ENCODE measurements at regions of chr19 and their contacts with region 1.

Region 1: GRCh38 chr19:40633207-40633606 is 32.0 kb downstream of the LTBP4 start:
- DNase-seq: no peak
- H3K4me3 Mint-ChIP-seq: no peak overlapping the region
- H3K27ac Mint-ChIP-seq: no peak overlapping the region
- H3K4me1 Mint-ChIP-seq: peaks cover 9% of the 10 kb centered on the region
- H3K27me3 Mint-ChIP-seq: peaks cover 7% of the 10 kb centered on the region

Region 2: DNA sequence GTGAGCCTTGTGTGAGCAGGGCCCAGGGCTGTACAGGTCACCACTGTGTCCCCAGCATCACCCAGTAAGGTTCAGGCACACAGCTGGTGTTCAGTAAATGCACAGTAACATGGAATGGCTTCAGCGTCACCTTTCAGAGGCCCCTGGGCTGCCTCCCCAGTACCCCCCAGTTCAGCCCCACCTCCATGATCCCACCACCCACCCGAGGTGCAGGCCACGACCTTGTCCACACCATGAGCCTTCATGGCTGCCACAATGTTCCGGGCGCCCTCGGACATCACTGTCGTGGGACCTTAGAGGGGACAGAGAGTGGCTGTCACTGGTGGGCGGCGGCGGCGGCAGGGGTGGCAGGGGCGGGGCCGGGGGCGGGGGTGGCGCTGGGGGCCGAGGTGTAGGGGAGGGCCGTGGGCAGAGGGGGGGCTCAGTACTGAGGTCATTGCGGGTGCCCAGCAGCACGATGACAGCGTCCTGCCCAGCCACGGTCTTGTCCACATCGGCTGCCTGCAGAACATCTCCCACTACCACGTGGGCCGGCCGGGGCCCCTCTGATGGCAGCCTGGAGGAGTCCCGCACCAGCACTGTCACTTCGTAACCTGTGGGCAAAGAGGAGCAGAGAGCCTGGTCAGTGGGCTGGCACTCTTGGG is 175.1 kb before region 1 on chr19:
- CTCF ChIA-PET with region 1: no interaction called
- POLR2A ChIA-PET with region 1: no interaction called
- DNase-seq: no peak
- H3K4me3 Mint-ChIP-seq: no peak overlapping the region
- H3K27ac Mint-ChIP-seq: no peak overlapping the region
- H3K4me1 Mint-ChIP-seq: peaks cover 5% of the 10 kb centered on the region
- H3K27me3 Mint-ChIP-seq: no peaks in the 10 kb centered on the region

Region 3: DNA sequence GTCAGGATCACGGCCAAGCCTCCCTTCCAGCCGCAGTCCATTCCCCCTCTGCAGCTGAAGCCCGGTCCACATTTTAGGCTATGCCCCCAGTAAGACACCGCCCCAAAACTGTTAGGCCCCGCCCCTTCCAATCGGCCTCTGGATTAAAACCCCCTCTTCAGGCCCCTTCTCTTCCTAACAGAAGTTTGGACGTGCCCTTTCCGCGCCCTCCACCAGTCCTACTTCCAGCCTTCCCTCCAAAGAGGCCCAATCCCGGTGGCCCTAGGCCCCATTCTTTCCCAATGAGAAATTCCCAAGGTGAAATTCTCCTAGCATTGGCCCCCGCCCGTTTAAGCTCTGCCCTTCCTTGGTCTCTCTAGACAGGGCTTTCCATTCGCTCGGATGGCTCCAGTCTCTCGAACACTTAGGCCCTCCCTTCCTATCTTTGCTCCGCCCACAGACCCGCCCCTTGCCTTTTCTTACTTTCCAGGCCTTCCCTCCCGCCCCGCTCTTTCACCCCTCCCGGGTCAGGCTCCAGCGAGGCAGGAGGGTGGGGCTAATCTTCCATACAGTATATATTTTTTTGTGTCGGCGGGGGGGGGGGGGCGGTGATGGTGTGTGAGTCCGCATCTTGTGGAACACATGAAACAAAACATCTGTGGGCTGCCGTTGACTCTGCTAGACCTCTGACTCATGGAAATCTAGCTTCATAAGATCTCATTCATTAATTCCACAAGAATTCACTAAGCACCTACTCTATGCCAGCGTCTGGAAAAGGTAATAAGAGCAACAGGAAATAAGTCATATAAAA is 18.4 kb before region 1 on chr19:
- CTCF ChIA-PET with region 1: interaction called, 43 read pairs
- POLR2A ChIA-PET with region 1: interaction called, 6 read pairs
- DNase-seq: peak; percentile 85
- H3K4me3 Mint-ChIP-seq: peak overlapping the region; percentile 92
- H3K27ac Mint-ChIP-seq: peak overlapping the region; percentile 91
- H3K4me1 Mint-ChIP-seq: peaks cover 48% of the 10 kb centered on the region
- H3K27me3 Mint-ChIP-seq: no peaks in the 10 kb centered on the region

Region 4: GRCh38 chr19:40646564-40647254 is 13.5 kb after region 1 on chr19:
- CTCF ChIA-PET with region 1: interaction called, 49 read pairs
- POLR2A ChIA-PET with region 1: interaction called, 3 read pairs
- DNase-seq: no peak
- H3K4me3 Mint-ChIP-seq: no peak overlapping the region
- H3K27ac Mint-ChIP-seq: no peak overlapping the region
- H3K4me1 Mint-ChIP-seq: peaks cover 6% of the 10 kb centered on the region
- H3K27me3 Mint-ChIP-seq: peaks cover 10% of the 10 kb centered on the region

Measured in activated CD4-positive, alpha-beta memory T cell treated with anti-CD3 and anti-CD28 coated beads, Interleukin-2, amount 10 ng/mL, durations not matched to agents 7 days and 5 days (primary cell).